IMR-90 (cell line): ENCODE measurements at regions of chr1 and their contacts with region 1.

Region 1: GRCh38 chr1:223087291-223088255 is 55.5 kb downstream of the TLR5 start:
- DNase-seq: peak; percentile 20
- ATAC-seq: no peak
- H3K4me3 ChIP-seq: no peak overlapping the region
- H3K27ac ChIP-seq: no peak overlapping the region
- H3K4me1 ChIP-seq: no peaks in the 10 kb centered on the region
- H3K27me3 ChIP-seq: peaks cover 52% of the 10 kb centered on the region
- CTCF ChIP-seq: no peak
- POLR2A ChIP-seq: no peak
- RAD21 ChIP-seq: no peak

Region 2: GRCh38 chr1:222798116-222798515 is 289.5 kb before region 1 on chr1:
- CTCF ChIA-PET with region 1: interaction called, 16 read pairs
- POLR2A ChIA-PET with region 1: no interaction called
- dilution Hi-C with region 1: loop called (anchors 25 kb)
- in situ Hi-C with region 1: loop called (anchors 5 kb)
- intact Hi-C with region 1: no loop called
- DNase-seq: peak; percentile 79
- ATAC-seq: peak; percentile 89
- H3K4me3 ChIP-seq: no peak overlapping the region
- H3K27ac ChIP-seq: no peak overlapping the region
- H3K4me1 ChIP-seq: peaks cover 2% of the 10 kb centered on the region; the same call in 1 of the 2 replicates
- H3K27me3 ChIP-seq: peaks cover 4% of the 10 kb centered on the region
- CTCF ChIP-seq: no peak
- POLR2A ChIP-seq: no peak
- RAD21 ChIP-seq: no peak